ENCODE measurements at regions of chr7 and their contacts with region 1.

Region 1: DNA sequence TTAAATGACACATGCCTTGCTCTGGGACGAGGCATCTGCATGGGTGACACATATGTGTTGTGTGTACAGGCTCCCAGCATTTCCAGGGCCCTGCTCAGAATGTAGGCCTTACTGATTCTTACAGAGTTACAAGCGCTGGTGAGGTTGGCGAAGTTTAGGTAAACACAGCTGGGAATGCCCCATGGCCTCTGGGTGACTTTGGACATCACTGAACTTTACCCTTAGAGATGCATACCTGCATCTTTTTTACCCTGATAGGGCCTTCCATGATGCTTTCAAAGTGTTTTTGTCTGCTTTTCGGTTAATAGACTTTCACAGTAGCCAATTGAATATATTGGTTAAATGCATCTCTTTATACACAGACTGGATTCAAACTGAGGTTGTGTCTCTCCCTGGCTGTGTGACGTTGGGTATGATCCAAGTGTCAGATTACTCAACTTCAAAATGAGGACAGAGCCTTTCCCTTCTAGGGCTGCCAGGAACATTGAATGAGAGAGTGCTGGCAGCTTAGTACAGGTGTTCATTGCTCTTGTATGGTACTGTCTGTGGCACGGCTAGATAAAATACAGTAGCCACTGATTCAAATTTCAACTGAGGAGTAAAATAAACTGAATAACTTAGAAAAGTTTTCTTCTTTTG is 29.5 kb downstream of the EGFR start:
- DNase-seq: peak; percentile 86
- H3K4me3 Mint-ChIP-seq: no peak overlapping the region
- H3K27ac Mint-ChIP-seq: peak overlapping the region; percentile 49
- H3K4me1 Mint-ChIP-seq: peaks cover 66% of the 10 kb centered on the region
- H3K27me3 Mint-ChIP-seq: no peaks in the 10 kb centered on the region
- CTCF ChIP-seq: no peak

Region 2: DNA sequence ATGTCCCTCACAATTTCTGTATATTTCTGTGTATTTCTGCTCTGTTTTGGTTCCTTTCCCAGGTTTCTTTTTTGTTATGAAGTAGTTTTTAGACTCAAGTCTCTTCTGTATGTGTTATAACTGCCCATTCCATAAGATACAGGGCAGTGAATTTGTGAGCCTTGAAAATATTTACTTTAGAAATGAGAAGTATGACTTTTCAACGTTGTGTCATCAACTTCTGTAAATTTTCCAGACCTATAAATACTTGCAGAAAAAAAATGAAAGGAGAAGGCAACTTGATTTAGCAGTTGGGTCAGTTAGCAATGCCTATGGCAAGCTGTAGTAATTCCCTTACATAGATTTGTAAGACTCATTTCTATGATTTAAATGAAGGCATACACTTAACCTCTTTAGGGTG is 18.0 kb before region 1 on chr7:
- CTCF ChIA-PET with region 1: interaction called, 3 read pairs
- POLR2A ChIA-PET with region 1: interaction called, 14 read pairs
- intact Hi-C with region 1: no loop called
- DNase-seq: no peak
- H3K4me3 Mint-ChIP-seq: no peak overlapping the region
- H3K27ac Mint-ChIP-seq: no peak overlapping the region
- H3K4me1 Mint-ChIP-seq: peaks cover 61% of the 10 kb centered on the region
- H3K27me3 Mint-ChIP-seq: no peaks in the 10 kb centered on the region
- CTCF ChIP-seq: no peak

Region 3: GRCh38 chr7:55036958-55037736 is 11.2 kb before region 1 on chr7:
- CTCF ChIA-PET with region 1: interaction called, 3 read pairs
- POLR2A ChIA-PET with region 1: interaction called, 14 read pairs
- intact Hi-C with region 1: no loop called
- DNase-seq: no peak
- H3K4me3 Mint-ChIP-seq: no peak overlapping the region
- H3K27ac Mint-ChIP-seq: peak overlapping the region; percentile 16
- H3K4me1 Mint-ChIP-seq: peaks cover 31% of the 10 kb centered on the region
- H3K27me3 Mint-ChIP-seq: no peaks in the 10 kb centered on the region
- CTCF ChIP-seq: no peak